ENCODE measurements at regions of chr1 and their contacts with region 1.

Region 1: GRCh38 chr1:26472901-26473845 is 933 bp downstream of the HMGN2 start:
- DNase-seq: peak; percentile 74 to 95
- H3K4me3 ChIP-seq: peak overlapping the region; percentile 71 to 96 (median 82)
- H3K27ac ChIP-seq: peak overlapping the region; percentile 99; the same call in 1 of the 2 replicates
- H3K4me1 ChIP-seq: peaks cover 8 to 13% (median 11%) of the 10 kb centered on the region in 4 experiments
- H3K27me3 ChIP-seq: peaks cover 0 to 4% (median 0%) of the 10 kb centered on the region in 4 experiments; a peak in 2 of 7 replicates
- CTCF ChIP-seq: no peak
- EP300 ChIP-seq: no peak
- POLR2A ChIP-seq: peak in 1 of 2 experiments; percentile 8; a peak in 1 of 3 replicates
- RAD21 ChIP-seq: no peak

Region 2: GRCh38 chr1:26431979-26432695 is 41.0 kb before region 1 on chr1 and contains the start of gene DHDDS:
- CTCF ChIA-PET with region 1: interaction called, 7 read pairs
- POLR2A ChIA-PET with region 1: interaction called, 28 read pairs
- DNase-seq: peak; percentile 95 to 99
- H3K4me3 ChIP-seq: peak within 1 kb of the TSS; percentile 62 to 86 (median 83)
- H3K27ac ChIP-seq: peak within 1 kb of the TSS; percentile 53
- H3K4me1 ChIP-seq: peaks cover 2 to 8% (median 5%) of the 10 kb centered on the region in 4 experiments; a peak in 6 of 7 replicates
- H3K27me3 ChIP-seq: no peaks in the 10 kb centered on the region
- CTCF ChIP-seq: no peak
- EP300 ChIP-seq: peak in 1 of 2 experiments; percentile 90; a peak in 2 of 3 replicates
- POLR2A ChIP-seq: peak; percentile 38 to 42; a peak in 2 of 3 replicates
- RAD21 ChIP-seq: no peak
- total RNA-seq, gene DHDDS: 44.6 and 48.0 TPM in 2 replicates

Region 3: GRCh38 chr1:26459573-26460031 is 13.6 kb before region 1 on chr1:
- CTCF ChIA-PET with region 1: interaction called, 7 read pairs
- POLR2A ChIA-PET with region 1: interaction called, 45 read pairs
- DNase-seq: no peak
- H3K4me3 ChIP-seq: no peak overlapping the region
- H3K27ac ChIP-seq: no peak overlapping the region
- H3K4me1 ChIP-seq: no peaks in the 10 kb centered on the region
- H3K27me3 ChIP-seq: no peaks in the 10 kb centered on the region
- CTCF ChIP-seq: no peak
- EP300 ChIP-seq: no peak
- POLR2A ChIP-seq: no peak
- RAD21 ChIP-seq: no peak

Region 4: DNA sequence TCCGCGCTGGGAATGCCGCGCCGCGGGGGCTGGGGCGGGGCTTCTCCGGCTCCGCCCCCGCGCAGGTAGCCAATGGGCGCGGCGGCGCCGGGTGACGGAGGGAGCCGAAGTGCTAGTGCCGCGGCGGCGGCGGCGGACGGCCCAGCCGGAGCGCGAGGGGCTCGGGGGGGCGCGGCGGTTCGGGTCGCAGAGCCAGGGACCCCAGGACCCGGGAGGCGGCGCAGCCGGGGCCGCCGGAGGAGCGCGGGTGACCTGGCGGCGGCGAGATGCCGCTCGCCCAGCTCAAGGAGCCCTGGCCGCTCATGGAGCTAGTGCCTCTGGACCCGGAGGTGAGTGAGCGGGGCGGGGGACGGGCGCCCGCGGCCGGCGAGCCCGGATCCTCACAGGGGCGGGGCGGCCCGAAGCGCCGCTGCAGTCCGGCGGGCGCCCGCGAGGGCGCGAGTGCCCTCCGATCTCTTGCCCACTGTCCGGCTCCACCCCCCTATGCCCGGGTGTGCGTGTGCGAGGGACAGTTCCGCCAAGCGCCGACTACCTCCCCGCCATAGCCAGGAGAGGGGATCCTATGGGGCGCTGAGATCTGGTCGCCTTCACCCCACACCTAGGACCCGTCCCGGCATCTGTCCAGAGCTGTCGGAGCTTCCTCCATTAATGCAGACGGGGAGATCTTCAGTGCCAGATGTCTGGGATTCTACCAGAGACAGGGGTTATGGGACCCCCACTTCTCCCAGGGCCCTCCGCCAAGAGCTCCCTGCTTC is 56.7 kb after region 1 on chr1 and contains the start of gene RPS6KA1:
- CTCF ChIA-PET with region 1: interaction called, 7 read pairs
- POLR2A ChIA-PET with region 1: interaction called, 27 read pairs
- DNase-seq: peak in 1 of 2 experiments; percentile 88
- H3K4me3 ChIP-seq: peak within 1 kb of the TSS; percentile 51 to 97 (median 94)
- H3K27ac ChIP-seq: peak within 1 kb of the TSS; percentile 42; the same call in 1 of the 2 replicates
- H3K4me1 ChIP-seq: peaks cover 11 to 20% (median 19%) of the 10 kb centered on the region in 4 experiments
- H3K27me3 ChIP-seq: no peaks in the 10 kb centered on the region
- CTCF ChIP-seq: no peak
- EP300 ChIP-seq: no peak
- POLR2A ChIP-seq: peak; percentile 67 to 69; a peak in 2 of 3 replicates
- RAD21 ChIP-seq: no peak
- total RNA-seq, gene RPS6KA1: 55.0 and 56.5 TPM in 2 replicates

Region 5: DNA sequence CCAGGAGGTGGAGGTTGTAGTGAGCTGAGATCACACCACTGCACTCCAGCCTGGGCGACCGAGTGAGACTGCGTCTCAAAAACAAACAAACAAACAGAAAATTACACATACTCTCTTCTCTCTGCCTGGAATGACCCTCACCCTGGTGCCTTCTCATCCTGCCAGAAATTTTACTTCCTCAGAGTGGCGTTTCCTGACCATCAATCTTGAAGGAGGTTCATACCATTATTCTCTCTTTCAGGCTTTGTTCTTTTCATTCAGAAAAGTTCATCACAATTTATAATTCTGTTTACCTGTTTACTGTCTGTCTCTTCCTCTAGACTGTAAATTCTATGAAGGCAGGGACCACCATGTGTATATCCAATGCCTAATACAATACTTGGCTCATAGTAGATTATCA is 135.7 kb after region 1 on chr1:
- CTCF ChIA-PET with region 1: no interaction called
- POLR2A ChIA-PET with region 1: no interaction called
- DNase-seq: no peak
- H3K4me3 ChIP-seq: no peak overlapping the region
- H3K27ac ChIP-seq: no peak overlapping the region
- H3K4me1 ChIP-seq: peaks cover 0 to 5% (median 3%) of the 10 kb centered on the region in 4 experiments; a peak in 4 of 7 replicates
- H3K27me3 ChIP-seq: no peaks in the 10 kb centered on the region
- CTCF ChIP-seq: no peak
- EP300 ChIP-seq: no peak
- POLR2A ChIP-seq: no peak
- RAD21 ChIP-seq: no peak; a peak in 2 of 4 replicates